Sciatic nerve (tissue), 2 donors: ENCODE measurements at regions of chr5 and their contacts with region 1.

Region 1: GRCh38 chr5:149636851-149637246 is 55.6 kb downstream of the ARHGEF37 start:
- DNase-seq: peak; percentile 91
- ATAC-seq: peak; percentile 71

Region 2: GRCh38 chr5:148297731-148298130 is 1339.1 kb before region 1 on chr5:
- intact Hi-C with region 1: no loop called
- DNase-seq: no peak
- ATAC-seq: no peak

Region 3: GRCh38 chr5:149828161-149828884 is 191.5 kb after region 1 on chr5:
- intact Hi-C with region 1: loop called (anchors 1 kb)
- DNase-seq: peak; percentile 95
- ATAC-seq: peak; percentile 80